ENCODE measurements at regions of chr7 and their contacts with region 1.

Region 1: DNA sequence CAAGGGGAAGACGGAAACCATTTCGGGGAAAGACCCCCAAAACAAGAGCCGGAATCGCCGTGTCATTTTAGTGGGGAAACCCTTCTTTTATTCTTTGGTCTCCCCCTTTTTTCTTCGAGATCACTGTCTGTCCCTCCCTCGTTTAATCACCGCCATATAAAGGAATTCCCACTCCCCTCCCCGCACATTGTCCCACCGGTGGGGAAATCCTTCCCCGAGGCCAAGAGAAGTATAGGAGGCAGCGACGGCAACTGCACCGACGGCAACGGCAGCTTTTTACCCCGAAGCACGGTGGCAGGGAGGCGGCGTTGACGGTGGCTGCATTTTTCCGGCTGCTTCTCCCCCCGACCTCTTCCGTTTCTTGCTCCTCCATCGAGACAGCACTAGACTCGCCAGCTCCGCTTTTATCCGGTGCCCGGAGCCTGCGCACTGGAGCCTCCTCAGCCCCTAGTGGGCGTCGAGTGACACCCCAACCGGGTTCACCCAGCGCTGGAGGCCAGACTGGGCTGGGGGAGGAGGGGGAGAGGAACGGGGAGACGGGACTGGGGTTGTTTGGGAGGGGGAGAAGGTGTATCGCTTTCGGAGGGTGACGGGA is 687 bp upstream of the KMT2E start:
- DNase-seq: peak; percentile 95
- H3K4me3 Mint-ChIP-seq: peak overlapping the region; percentile 97
- H3K27ac Mint-ChIP-seq: peak overlapping the region; percentile 100
- H3K4me1 Mint-ChIP-seq: peaks cover 34% of the 10 kb centered on the region
- H3K27me3 Mint-ChIP-seq: no peaks in the 10 kb centered on the region

Region 2: GRCh38 chr7:104791080-104791479 is 222.2 kb before region 1 on chr7:
- CTCF ChIA-PET with region 1: no interaction called
- POLR2A ChIA-PET with region 1: no interaction called
- DNase-seq: no peak
- H3K4me3 Mint-ChIP-seq: no peak overlapping the region
- H3K27ac Mint-ChIP-seq: no peak overlapping the region
- H3K4me1 Mint-ChIP-seq: no peaks in the 10 kb centered on the region
- H3K27me3 Mint-ChIP-seq: peaks cover 12% of the 10 kb centered on the region

Region 3: DNA sequence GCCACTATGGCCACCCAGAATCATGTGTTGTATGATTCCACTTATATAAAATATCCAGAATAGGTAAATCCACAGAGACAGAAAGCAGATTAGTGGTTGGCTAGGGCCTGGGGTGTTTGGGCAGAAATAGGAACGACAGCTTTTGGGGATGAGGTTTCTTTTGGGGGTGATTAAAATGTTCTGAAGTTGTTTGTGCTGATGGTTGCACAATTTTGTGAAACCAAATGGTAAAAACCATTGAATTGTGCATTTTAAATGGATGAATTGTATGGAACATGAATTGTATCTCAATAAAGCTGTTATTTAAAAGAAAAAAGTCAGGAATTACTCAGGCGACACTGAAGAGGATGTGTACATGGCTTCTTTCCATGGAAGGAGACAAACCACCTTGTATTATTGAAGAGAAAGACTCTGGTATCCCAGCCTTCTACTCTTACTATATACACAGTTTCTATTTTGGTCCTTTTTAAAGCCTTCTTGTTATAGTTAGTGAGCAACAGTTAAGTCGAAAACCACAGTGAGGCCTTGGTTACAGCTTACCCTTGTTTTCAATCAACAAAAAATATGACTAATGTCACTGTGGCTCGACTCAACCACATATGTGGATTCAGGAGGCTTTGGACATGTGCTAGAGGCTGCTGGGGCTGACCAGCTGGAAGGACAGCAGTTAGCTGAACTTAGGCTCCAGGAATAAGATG is 56.4 kb before region 1 on chr7:
- CTCF ChIA-PET with region 1: no interaction called
- POLR2A ChIA-PET with region 1: interaction called, 27 read pairs
- DNase-seq: peak; percentile 65
- H3K4me3 Mint-ChIP-seq: peak overlapping the region; percentile 54
- H3K27ac Mint-ChIP-seq: peak overlapping the region; percentile 98
- H3K4me1 Mint-ChIP-seq: peaks cover 56% of the 10 kb centered on the region
- H3K27me3 Mint-ChIP-seq: no peaks in the 10 kb centered on the region

Region 4: DNA sequence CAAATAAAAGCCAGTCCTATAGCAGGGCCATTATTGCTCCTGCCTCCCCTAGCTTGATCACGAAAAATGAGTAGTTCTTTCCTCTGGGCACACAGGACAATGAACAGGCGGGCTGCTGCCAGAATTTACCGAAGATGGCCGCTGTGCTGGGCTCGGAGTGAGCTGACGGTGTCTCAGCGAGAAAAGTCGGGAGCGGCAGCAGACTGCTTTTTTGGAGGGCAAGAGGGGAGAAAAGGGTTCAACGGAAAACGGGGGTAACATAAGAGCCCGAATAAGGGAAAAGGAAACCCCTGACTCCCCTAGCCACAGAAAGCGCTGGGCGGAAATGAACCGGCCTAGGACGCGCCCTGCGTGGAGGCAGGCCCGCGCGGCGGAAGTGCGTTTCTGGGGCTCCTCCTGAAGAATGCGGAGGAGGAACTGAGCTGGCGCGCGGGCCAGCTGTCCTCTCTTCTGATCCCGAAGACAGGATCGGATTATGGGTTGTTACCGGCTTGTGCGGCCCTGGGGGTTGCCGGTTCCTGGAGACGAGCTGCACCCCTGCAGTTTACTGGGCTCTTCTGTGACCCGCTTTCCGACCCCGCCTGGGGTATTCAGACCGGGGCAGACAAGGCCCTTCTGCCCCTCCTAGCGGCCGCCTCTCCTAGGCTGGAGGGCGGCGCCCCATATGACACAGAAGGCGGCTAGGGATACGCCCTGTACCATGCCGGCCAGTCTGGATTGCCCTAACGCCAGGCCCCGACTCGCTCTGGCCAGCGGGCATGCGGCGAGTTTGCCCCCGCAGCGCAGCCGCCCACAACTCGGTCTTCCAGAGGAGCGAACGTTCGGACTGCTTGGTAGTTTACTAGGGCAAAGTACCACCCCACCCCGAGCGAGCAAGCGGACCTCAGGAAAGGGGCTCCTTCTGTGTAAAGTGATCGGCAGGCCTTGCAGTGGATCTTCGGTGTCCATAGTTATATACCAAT is 29.5 kb before region 1 on chr7:
- CTCF ChIA-PET with region 1: interaction called, 106 read pairs
- POLR2A ChIA-PET with region 1: interaction called, 822 read pairs
- DNase-seq: peak; percentile 88
- H3K4me3 Mint-ChIP-seq: peak overlapping the region; percentile 98
- H3K27ac Mint-ChIP-seq: peak overlapping the region; percentile 99
- H3K4me1 Mint-ChIP-seq: peaks cover 72% of the 10 kb centered on the region
- H3K27me3 Mint-ChIP-seq: no peaks in the 10 kb centered on the region

Region 5: DNA sequence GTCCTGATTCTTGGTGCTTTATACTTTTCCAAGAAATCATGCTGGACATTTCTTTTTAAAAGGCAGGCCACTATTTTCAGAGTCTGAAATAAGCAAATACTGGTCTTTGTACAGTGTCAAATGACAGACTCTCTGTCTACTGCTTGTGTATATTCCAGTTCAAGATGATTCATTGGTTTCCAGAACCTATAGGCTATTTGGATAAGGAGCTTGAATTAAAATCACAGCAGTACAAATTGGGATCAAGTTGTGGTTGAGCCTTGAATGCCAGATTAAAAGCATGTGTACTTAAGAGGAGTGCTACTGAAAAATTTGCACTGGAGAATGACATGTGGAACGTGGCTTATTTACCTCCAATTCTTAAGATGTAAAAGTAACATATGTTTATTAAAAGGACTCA is 11.4 kb after region 1 on chr7:
- CTCF ChIA-PET with region 1: interaction called, 4 read pairs
- POLR2A ChIA-PET with region 1: interaction called, 98 read pairs
- DNase-seq: no peak
- H3K4me3 Mint-ChIP-seq: no peak overlapping the region
- H3K27ac Mint-ChIP-seq: no peak overlapping the region
- H3K4me1 Mint-ChIP-seq: peaks cover 78% of the 10 kb centered on the region
- H3K27me3 Mint-ChIP-seq: no peaks in the 10 kb centered on the region

Region 6: GRCh38 chr7:105055621-105056020 is 42.3 kb after region 1 on chr7:
- CTCF ChIA-PET with region 1: no interaction called
- POLR2A ChIA-PET with region 1: interaction called, 14 read pairs
- DNase-seq: no peak
- H3K4me3 Mint-ChIP-seq: no peak overlapping the region
- H3K27ac Mint-ChIP-seq: no peak overlapping the region
- H3K4me1 Mint-ChIP-seq: peaks cover 36% of the 10 kb centered on the region
- H3K27me3 Mint-ChIP-seq: no peaks in the 10 kb centered on the region

Region 7: DNA sequence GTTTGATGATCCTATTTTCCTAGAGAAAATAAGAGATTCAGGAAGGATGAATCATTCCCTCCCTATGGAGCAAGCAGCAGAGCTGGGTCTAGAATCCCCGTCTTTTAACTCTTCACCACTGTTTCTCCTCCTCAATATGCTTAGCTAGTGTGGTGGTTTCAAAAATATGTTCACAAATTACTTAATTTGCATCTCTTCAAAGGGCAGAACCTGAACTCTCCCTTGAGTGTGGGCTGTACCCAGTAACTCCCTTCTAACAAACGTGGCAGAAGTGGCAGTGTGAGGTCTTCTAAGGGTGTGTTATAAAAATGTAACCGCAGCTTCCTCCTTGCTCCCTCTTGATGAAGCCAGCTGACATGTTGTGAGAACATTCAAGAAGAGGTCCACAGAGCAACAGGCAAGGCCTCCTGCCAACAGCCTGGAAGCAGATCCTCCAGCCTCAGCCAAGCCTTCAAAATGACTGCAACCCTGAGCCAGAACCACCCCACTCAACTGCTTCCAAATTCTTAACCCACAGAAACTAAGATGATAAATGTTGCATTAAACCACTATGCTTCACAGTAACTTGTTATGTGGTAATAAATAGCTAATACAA is 338.8 kb after region 1 on chr7:
- CTCF ChIA-PET with region 1: no interaction called
- POLR2A ChIA-PET with region 1: interaction called, 14 read pairs
- DNase-seq: peak; percentile 69
- H3K4me3 Mint-ChIP-seq: peak overlapping the region; percentile 46
- H3K27ac Mint-ChIP-seq: peak overlapping the region; percentile 97
- H3K4me1 Mint-ChIP-seq: peaks cover 54% of the 10 kb centered on the region
- H3K27me3 Mint-ChIP-seq: no peaks in the 10 kb centered on the region

Measured in activated CD4-positive, alpha-beta memory T cell treated with anti-CD3 and anti-CD28 coated beads, Interleukin-2, amount 10 ng/mL, durations not matched to agents 7 days and 5 days (primary cell).